ENCODE measurements at regions of chr10 and their contacts with region 1.

Region 1: GRCh38 chr10:93080350-93081046 is 6.8 kb downstream of the CYP26A1 start:
- DNase-seq: peak; percentile 86
- CTCF ChIP-seq: peak; percentile 78

Region 2: GRCh38 chr10:93288654-93289634 is 208.4 kb after region 1 on chr10:
- in situ Hi-C with region 1: loop called (anchors 25 kb)
- DNase-seq: peak; percentile 72
- CTCF ChIP-seq: peak; percentile 82

Region 3: GRCh38 chr10:93496322-93497041 is 416.0 kb after region 1 on chr10 and contains the start of gene CEP55:
- in situ Hi-C with region 1: loop called (anchors 25 kb)
- DNase-seq: peak; percentile 93
- CTCF ChIP-seq: no peak

Region 4: GRCh38 chr10:94916423-94916822 is 1835.9 kb after region 1 on chr10:
- in situ Hi-C with region 1: no loop called
- DNase-seq: no peak
- CTCF ChIP-seq: no peak